ENCODE measurements at regions of chr5 and their contacts with region 1.

Region 1: DNA sequence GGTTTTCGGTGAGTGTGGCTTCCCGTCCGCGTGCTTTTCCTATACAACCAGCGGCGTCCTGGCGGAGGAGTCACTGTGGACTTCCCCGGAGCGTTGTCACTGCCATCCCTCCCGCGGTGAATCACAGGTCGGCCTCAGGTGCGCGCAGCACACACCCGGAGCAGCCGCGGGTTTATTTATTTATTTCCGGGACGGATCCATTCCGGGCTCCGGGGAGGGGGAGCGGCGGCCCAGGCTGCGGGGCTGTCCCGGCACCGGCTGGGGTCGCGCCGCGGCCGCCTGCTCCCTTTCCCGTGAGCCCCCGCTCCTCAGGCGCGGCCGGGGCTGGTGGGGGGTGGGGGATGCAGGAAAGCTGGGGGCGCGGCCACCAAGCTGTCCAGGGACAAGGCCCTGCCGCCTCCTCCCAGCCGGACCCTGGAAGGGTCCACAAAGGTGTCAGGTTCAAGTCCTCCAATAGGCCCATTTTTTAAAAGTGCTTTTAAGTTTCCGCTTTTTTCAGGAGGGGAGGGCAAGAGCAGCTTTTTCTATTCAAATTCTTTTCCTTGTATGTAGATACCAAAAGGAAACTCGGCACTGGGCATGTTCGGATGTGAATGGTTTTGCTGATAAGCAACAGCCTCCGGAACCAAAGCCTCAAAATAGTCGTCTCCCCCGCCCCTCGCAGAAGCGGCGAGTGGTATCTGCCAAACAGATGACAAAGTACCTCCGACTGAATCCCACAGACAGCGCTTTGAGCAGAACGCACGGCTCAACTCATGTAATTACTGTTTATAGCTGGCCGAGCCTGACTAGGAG is 192.5 kb downstream of the CD180 start:
- DNase-seq: peak; percentile 95
- H3K4me3 Mint-ChIP-seq: peak overlapping the region; percentile 92
- H3K27ac Mint-ChIP-seq: peak overlapping the region; percentile 95
- H3K4me1 Mint-ChIP-seq: peaks cover 58% of the 10 kb centered on the region
- H3K27me3 Mint-ChIP-seq: no peaks in the 10 kb centered on the region

Region 2: GRCh38 chr5:66828548-66829357 is 175.4 kb before region 1 on chr5:
- CTCF ChIA-PET with region 1: no interaction called
- POLR2A ChIA-PET with region 1: interaction called, 6 read pairs
- intact Hi-C with region 1: loop called (anchors 2 kb)
- DNase-seq: peak; percentile 78
- H3K4me3 Mint-ChIP-seq: peak overlapping the region; percentile 85
- H3K27ac Mint-ChIP-seq: peak overlapping the region; percentile 87
- H3K4me1 Mint-ChIP-seq: peaks cover 29% of the 10 kb centered on the region
- H3K27me3 Mint-ChIP-seq: peaks cover 15% of the 10 kb centered on the region

Region 3: DNA sequence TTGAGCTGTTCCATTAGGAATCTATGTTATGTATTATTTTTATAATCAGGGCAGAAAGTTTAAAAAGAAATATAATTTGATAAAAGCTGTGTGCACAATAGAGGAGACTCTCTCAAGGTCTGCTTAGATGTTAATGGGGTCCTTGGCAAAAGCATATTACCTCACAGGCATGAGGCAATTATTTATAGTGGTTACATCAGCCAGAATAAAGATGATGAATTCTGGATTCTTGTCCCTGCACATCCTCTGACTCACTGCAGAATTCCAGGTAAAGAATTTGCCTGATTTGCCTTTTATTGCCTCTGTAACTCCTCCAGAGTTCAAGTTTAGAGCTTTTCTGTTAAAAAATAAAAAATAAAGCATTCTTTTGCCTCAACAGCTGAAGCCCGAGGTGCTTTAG is 154.3 kb before region 1 on chr5:
- CTCF ChIA-PET with region 1: no interaction called
- POLR2A ChIA-PET with region 1: no interaction called
- intact Hi-C with region 1: no loop called
- DNase-seq: no peak
- H3K4me3 Mint-ChIP-seq: no peak overlapping the region
- H3K27ac Mint-ChIP-seq: no peak overlapping the region
- H3K4me1 Mint-ChIP-seq: peaks cover 11% of the 10 kb centered on the region
- H3K27me3 Mint-ChIP-seq: peaks cover 25% of the 10 kb centered on the region

Region 4: DNA sequence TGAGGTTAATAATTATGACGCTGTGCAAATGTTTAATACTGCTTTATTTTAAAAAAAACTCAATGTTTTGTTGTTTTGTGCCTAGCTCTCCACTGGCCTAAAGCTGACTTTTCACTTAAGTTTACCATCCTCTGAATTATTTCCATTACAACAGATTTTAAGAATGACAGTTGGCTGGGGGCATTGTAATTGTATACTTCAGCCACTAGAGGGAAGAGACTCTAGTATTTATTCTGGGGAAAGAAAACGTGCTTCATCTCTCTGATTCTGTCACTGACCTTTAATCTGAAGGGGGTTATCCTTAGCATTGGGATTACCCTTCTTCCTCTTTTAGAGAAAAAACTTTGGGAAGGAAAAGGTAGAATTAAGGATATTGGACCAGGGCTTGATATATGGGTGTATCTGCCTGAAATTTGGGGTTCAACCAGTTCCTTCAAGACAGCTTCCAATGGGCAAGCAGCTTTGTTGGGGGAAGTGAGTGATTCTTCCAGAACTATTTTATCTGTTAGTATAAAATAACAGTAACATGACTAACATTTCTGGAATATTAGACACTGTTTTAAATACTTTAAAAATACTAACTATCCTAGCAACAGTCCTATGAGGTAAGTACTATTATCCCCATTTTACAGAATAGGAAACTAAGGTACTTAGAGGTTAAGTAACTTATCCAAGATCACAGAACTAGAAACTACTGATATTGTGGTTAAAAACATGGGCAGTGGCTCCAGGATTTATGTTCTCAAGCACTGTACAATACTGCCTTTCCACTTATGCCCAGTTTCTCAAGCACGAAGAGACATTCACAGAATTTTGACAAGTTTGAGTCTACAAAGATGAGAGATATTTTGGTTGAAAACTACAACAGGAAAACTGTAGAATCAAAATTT is 15.9 kb before region 1 on chr5:
- CTCF ChIA-PET with region 1: interaction called, 13 read pairs
- POLR2A ChIA-PET with region 1: no interaction called
- intact Hi-C with region 1: no loop called
- DNase-seq: no peak
- H3K4me3 Mint-ChIP-seq: no peak overlapping the region
- H3K27ac Mint-ChIP-seq: no peak overlapping the region
- H3K4me1 Mint-ChIP-seq: peaks cover 4% of the 10 kb centered on the region
- H3K27me3 Mint-ChIP-seq: no peaks in the 10 kb centered on the region

Region 5: DNA sequence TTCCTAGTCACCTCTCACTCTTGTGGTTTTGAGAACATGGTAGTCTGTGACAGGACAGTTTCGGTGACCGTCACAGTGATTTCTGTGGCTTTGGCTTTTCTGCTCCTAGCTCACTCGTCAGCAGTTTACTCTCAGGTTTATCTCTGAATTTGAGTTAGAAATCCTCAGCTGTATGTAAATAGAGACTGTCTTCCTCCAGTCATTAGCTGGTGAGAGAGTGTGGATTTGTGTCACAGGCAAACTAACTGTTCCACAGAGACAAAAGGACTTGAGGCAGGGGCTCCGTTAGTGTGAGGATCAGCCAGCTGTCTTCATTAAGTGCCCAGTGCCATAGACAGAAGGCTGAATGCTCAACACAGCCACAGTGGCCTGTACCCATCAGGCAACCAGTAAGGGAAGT is 61.1 kb after region 1 on chr5:
- CTCF ChIA-PET with region 1: interaction called, 5 read pairs
- POLR2A ChIA-PET with region 1: interaction called, 3 read pairs
- intact Hi-C with region 1: loop called (anchors 1 kb)
- DNase-seq: peak; percentile 71
- H3K4me3 Mint-ChIP-seq: no peak overlapping the region
- H3K27ac Mint-ChIP-seq: peak overlapping the region; percentile 74
- H3K4me1 Mint-ChIP-seq: peaks cover 26% of the 10 kb centered on the region
- H3K27me3 Mint-ChIP-seq: no peaks in the 10 kb centered on the region

Region 6: DNA sequence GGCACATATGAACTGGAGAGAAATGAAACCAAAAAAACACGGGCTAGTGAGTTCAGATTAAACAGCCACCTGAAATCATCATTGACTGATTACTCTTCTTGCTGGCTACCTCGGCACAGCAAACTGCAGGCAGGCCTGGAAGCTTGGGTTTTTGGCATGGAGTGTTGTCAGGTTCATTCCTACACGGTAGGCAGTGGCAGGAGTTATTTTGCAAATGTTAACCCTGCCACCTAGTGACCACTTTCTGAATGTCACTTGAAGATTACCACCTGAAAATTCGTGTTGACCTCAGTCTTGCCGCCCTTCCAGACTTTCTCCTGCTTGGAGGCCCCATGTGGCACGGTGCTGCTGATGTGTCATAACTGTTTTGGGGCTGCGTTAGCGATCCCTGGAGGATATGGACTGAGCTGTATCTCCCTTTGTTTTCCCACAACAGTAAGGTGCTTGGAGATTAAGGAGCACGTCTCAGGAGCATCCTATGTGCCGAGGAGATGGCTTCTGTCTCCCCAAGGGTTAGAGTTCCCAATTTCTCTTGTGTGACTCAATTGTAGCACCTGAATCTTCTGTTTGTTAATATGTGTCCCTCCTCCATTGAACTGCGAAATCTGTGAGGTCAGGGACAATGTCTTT is 205.1 kb after region 1 on chr5:
- CTCF ChIA-PET with region 1: interaction called, 6 read pairs
- POLR2A ChIA-PET with region 1: interaction called, 3 read pairs
- intact Hi-C with region 1: loop called (anchors 1 kb)
- DNase-seq: peak; percentile 67
- H3K4me3 Mint-ChIP-seq: no peak overlapping the region
- H3K27ac Mint-ChIP-seq: peak overlapping the region; percentile 46
- H3K4me1 Mint-ChIP-seq: peaks cover 57% of the 10 kb centered on the region
- H3K27me3 Mint-ChIP-seq: no peaks in the 10 kb centered on the region

Region 7: DNA sequence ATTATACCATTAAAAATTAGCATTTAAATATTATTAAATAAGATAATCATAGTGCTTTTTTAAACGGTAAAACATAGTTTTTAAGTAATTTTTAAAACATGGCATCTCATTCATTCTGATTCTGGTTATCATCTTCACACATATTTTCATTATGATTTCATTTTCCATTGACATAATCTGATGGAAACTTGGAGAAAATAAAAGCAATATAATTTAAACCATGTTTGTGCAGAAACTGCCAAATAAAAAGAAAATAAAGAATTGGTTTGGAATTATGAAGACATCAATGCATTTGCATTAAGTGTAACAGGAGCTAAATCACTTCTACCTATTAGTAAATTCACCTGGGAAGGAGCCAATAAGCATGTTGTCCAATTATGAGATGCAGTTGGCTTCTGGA is 682.6 kb after region 1 on chr5:
- CTCF ChIA-PET with region 1: no interaction called
- POLR2A ChIA-PET with region 1: no interaction called
- intact Hi-C with region 1: no loop called
- DNase-seq: no peak
- H3K4me3 Mint-ChIP-seq: no peak overlapping the region
- H3K27ac Mint-ChIP-seq: no peak overlapping the region
- H3K4me1 Mint-ChIP-seq: no peaks in the 10 kb centered on the region
- H3K27me3 Mint-ChIP-seq: peaks cover 5% of the 10 kb centered on the region

Region 8: GRCh38 chr5:68433923-68434879 is 1430.1 kb after region 1 on chr5:
- CTCF ChIA-PET with region 1: no interaction called
- POLR2A ChIA-PET with region 1: no interaction called
- intact Hi-C with region 1: loop called (anchors 10 kb)
- DNase-seq: peak; percentile 98
- H3K4me3 Mint-ChIP-seq: peak overlapping the region; percentile 42
- H3K27ac Mint-ChIP-seq: peak overlapping the region; percentile 77
- H3K4me1 Mint-ChIP-seq: peaks cover 53% of the 10 kb centered on the region
- H3K27me3 Mint-ChIP-seq: peaks cover 2% of the 10 kb centered on the region

Measured in activated CD4-positive, alpha-beta memory T cell treated with anti-CD3 and anti-CD28 coated beads for 36 hours (primary cell).